Aorta (tissue), 5 donors: ENCODE measurements at regions of chr11 and their contacts with region 1.

Region 1: DNA sequence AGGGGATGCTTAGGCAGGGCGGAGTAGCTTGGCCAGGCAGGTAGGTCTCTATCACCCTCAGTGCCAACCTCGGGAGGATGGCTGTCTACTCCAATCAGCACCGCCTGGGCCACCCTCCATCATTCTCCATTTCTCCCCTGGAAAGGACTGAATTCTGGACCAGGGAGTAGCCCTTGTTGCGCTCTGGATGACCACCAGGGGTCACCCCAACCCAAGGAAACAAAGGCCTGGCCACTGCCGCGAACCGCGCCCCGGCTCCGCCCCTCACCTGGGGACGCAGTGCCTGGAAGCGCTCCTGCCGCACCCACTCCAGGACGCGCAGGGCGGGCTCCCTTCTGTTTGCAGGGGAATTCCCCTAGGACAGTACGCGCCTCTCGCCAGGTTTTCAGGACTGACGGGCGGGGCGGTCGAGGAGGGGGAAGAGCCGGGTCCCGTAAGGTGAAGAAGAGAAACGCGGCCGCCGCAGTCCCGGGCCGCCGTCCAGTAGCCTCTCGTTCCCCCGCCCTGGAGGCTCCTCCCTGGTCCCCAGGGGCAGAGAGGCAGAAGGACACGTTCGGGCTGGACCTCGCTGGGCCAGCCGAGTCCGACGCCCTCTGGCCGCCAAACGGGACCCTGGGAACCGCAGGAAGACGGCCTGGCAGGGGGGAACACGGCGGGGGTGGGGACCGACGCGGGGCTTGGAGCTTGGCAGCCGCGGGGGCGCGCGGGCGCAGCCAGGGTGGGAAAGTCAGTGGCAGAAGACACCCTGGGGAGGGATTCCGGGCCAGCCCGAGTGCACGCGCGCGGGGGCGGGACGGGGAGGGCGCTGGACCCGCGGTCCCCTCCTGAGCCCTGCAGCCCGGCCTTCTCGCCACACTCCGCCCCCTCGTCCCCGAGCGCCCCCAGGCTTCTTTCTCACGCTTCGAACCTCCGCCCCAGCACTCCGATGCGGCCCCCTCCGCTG is 7.1 kb downstream of the SCN4B start:
- DNase-seq: peak; percentile 83 to 91
- ATAC-seq: peak; percentile 93
- H3K4me3 ChIP-seq: peak overlapping the region; percentile 1 to 48
- H3K27ac ChIP-seq: no peak overlapping the region
- H3K4me1 ChIP-seq: no peaks in the 10 kb centered on the region
- H3K27me3 ChIP-seq: no peaks in the 10 kb centered on the region

Region 2: GRCh38 chr11:118171269-118172062 is 25.9 kb after region 1 on chr11:
- intact Hi-C with region 1: loop called (anchors 1 to 2 kb)
- DNase-seq: peak; percentile 81 to 89
- ATAC-seq: peak; percentile 84
- H3K4me3 ChIP-seq: no peak overlapping the region
- H3K27ac ChIP-seq: no peak overlapping the region
- H3K4me1 ChIP-seq: no peaks in the 10 kb centered on the region
- H3K27me3 ChIP-seq: no peaks in the 10 kb centered on the region

Region 3: GRCh38 chr11:118198370-118198769 is 52.8 kb after region 1 on chr11:
- intact Hi-C with region 1: no loop called
- DNase-seq: peak; percentile 84 to 92
- ATAC-seq: peak; percentile 69
- H3K4me3 ChIP-seq: no peak overlapping the region
- H3K27ac ChIP-seq: no peak overlapping the region
- H3K4me1 ChIP-seq: peaks cover 3 to 4% of the 10 kb centered on the region in 2 donors
- H3K27me3 ChIP-seq: no peaks in the 10 kb centered on the region

Region 4: DNA sequence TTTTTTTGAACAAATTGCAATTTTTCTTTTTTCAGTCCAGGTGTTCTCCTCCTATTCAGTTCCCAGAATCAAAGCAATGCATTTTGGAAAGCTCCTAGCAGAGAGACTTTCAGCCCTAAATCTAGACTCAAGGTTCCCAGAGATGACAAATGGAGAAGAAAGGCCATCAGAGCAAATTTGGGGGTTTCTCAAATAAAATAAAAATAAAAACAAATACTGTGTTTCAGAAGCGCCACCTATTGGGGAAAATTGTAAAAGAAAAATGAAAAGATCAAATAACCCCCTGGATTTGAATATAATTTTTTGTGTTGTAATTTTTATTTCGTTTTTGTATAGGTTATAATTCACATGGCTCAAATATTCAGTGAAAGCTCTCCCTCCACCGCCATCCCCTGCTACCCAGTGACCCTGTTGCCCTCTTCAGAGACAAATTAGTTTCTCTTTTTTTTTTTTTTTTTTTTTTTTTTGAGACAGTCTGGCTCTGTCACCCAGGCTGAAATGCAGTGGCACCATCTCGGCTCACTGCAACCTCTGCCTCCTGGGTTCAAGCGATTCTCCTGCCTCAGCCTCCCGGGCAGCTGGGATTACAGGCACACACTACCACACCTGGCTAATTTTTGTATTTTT is 207.6 kb after region 1 on chr11:
- intact Hi-C with region 1: loop called (anchors 5 to 10 kb)
- DNase-seq: no peak
- ATAC-seq: no peak
- H3K4me3 ChIP-seq: no peak overlapping the region
- H3K27ac ChIP-seq: no peak overlapping the region
- H3K4me1 ChIP-seq: no peaks in the 10 kb centered on the region
- H3K27me3 ChIP-seq: peaks cover 0 to 3% of the 10 kb centered on the region in 2 donors

Region 5: GRCh38 chr11:118359295-118359958 is 213.9 kb after region 1 on chr11 and contains the start of gene UBE4A:
- intact Hi-C with region 1: loop called (anchors 5 to 10 kb)
- DNase-seq: peak; percentile 98 to 99
- ATAC-seq: peak; percentile 96
- H3K4me3 ChIP-seq: peak within 1 kb of the TSS; percentile 89 to 92
- H3K27ac ChIP-seq: no peak within 1 kb of the TSS
- H3K4me1 ChIP-seq: peaks cover 0 to 1% of the 10 kb centered on the region in 2 donors
- H3K27me3 ChIP-seq: no peaks in the 10 kb centered on the region
- total RNA-seq, gene UBE4A: 33.4 to 35.2 TPM